Mammary epithelial cell (primary cell): ENCODE measurements at regions of chr7 and their contacts with region 1.

Region 1: GRCh38 chr7:135170274-135170997 is at the start of gene CYREN:
- DNase-seq: peak; percentile 94
- H3K4me3 ChIP-seq: peak within 1 kb of the TSS; percentile 52 to 83 (median 79)
- H3K27ac ChIP-seq: peak within 1 kb of the TSS; percentile 91
- H3K4me1 ChIP-seq: peaks cover 31% of the 10 kb centered on the region
- H3K27me3 ChIP-seq: no peaks in the 10 kb centered on the region
- CTCF ChIP-seq: peak; percentile 26 to 75
- total RNA-seq, gene CYREN: 45.2 to 55.8 TPM

Region 2: GRCh38 chr7:134799377-134799776 is 371.1 kb before region 1 on chr7:
- CTCF ChIA-PET with region 1: interaction called, 16 read pairs
- dilution Hi-C with region 1: no loop called
- in situ Hi-C with region 1: no loop called
- intact Hi-C with region 1: no loop called
- DNase-seq: no peak
- H3K4me3 ChIP-seq: no peak overlapping the region
- H3K27ac ChIP-seq: peak overlapping the region; percentile 8
- H3K4me1 ChIP-seq: peaks cover 10% of the 10 kb centered on the region
- H3K27me3 ChIP-seq: no peaks in the 10 kb centered on the region
- CTCF ChIP-seq: no peak

Region 3: GRCh38 chr7:134986363-134987251 is 183.8 kb before region 1 on chr7 and contains the start of gene AGBL3:
- CTCF ChIA-PET with region 1: no interaction called
- dilution Hi-C with region 1: no loop called
- in situ Hi-C with region 1: loop called in 1 of 2 experiments (anchors 25 kb)
- intact Hi-C with region 1: loop called (anchors 10 kb)
- DNase-seq: peak; percentile 88
- H3K4me3 ChIP-seq: peak within 1 kb of the TSS; percentile 70 to 86 (median 71)
- H3K27ac ChIP-seq: peak within 1 kb of the TSS; percentile 64
- H3K4me1 ChIP-seq: no peaks in the 10 kb centered on the region
- H3K27me3 ChIP-seq: no peaks in the 10 kb centered on the region
- CTCF ChIP-seq: peak; percentile 28 to 72
- total RNA-seq, gene AGBL3: 0.61 to 1.2 TPM

Region 4: DNA sequence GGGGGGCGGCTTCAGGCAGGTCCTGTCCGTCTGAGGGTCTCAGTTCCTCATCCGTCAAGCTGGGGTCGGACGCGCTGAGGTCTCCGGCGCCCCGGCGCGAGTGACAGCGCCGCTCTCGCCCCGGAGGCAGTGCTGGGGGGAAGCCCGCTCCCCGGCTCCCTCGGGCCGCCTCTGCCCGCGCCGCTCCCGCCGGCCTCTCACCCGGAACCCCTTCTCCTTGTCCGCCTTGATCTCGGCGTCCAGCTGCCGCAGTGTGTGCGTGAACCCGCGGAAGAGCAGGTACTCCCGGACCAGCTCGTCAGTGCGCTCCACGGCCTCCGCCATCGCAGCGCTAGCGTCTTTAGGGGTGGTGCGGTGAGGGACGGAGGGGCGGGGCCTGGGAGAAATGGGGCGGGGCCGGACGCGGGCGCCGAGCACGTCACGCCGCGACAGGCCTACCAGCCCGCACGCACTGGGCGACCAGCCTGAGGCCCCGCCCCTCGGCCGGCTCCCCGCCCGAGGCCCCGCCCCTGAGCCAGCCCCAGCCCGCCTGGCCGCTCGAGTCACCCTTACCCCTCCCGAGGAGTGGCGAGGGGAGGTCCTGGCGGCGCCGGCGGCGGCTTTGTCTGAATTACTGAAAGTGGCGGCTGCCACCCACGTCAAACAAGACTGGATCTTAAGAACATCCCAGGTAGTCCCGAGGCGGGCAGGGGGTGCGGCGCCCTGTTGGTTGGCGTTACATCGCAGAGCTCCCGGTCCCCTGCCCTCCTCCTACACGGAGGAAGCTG is 40.9 kb after region 1 on chr7 and contains the start of gene WDR91:
- CTCF ChIA-PET with region 1: no interaction called
- dilution Hi-C with region 1: loop called (anchors 5 kb)
- in situ Hi-C with region 1: no loop called
- intact Hi-C with region 1: loop called (anchors 1 kb)
- DNase-seq: peak; percentile 93
- H3K4me3 ChIP-seq: peak within 1 kb of the TSS; percentile 80 to 87 (median 81)
- H3K27ac ChIP-seq: peak within 1 kb of the TSS; percentile 82
- H3K4me1 ChIP-seq: peaks cover 36% of the 10 kb centered on the region
- H3K27me3 ChIP-seq: no peaks in the 10 kb centered on the region
- CTCF ChIP-seq: peak in 1 of 2 donors; percentile 6
- total RNA-seq, gene WDR91: 31.5 to 33.8 TPM

Region 5: GRCh38 chr7:135335628-135336139 is 165.2 kb after region 1 on chr7:
- CTCF ChIA-PET with region 1: no interaction called
- dilution Hi-C with region 1: no loop called
- in situ Hi-C with region 1: no loop called
- intact Hi-C with region 1: loop called (anchors 5 kb)
- DNase-seq: peak; percentile 98
- H3K4me3 ChIP-seq: no peak overlapping the region
- H3K27ac ChIP-seq: no peak overlapping the region
- H3K4me1 ChIP-seq: peaks cover 22% of the 10 kb centered on the region
- H3K27me3 ChIP-seq: no peaks in the 10 kb centered on the region
- CTCF ChIP-seq: peak; percentile 85 to 90